ENCODE measurements at regions of chr11 and their contacts with region 1.

Region 1: GRCh38 chr11:13276832-13277767 is 490 bp upstream of the BMAL1 start:
- DNase-seq: peak; percentile 98 to 99 (median 99)
- ATAC-seq: peak; percentile 95 to 98 (median 98)
- H3K4me3 ChIP-seq: peak overlapping the region; percentile 84 to 99 (median 96)
- H3K27ac ChIP-seq: peak overlapping the region; percentile 37 to 95 (median 90)
- H3K4me1 ChIP-seq: peaks cover 0 to 33% (median 19%) of the 10 kb centered on the region in 12 donors
- H3K27me3 ChIP-seq: peaks cover 0 to 11% (median 0%) of the 10 kb centered on the region in 9 donors
- CTCF ChIP-seq: peak in 1 of 12 donors; percentile 6
- POLR2A ChIP-seq: peak; percentile 67 to 77

Region 2: DNA sequence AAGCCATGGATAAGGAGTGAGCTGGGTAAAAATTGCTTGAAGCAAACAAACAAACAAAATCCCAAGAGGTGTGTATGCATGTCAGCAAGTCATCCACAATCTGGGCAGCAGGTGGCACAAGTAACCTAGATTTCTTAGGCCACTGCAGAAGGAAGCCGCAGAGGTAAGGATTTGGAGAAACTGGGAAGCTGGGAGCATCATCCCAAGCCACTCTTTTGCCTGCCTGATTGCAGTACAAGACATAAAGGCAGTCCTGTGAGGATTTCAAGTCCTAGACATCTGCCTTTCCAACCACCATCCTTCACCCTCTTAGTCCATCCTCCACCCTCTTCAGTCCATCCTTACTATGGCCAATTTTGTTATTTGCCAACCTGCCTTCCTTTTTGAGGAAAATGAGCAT is 66.7 kb before region 1 on chr11:
- intact Hi-C with region 1: loop called in 2 of 10 experiments (anchors 5 to 10 kb)
- DNase-seq: peak in 4 of 5 donors; percentile 39 to 58 (median 52)
- ATAC-seq: peak in 3 of 4 donors; percentile 78 to 79 (median 78)
- H3K4me3 ChIP-seq: no peak overlapping the region
- H3K27ac ChIP-seq: no peak overlapping the region
- H3K4me1 ChIP-seq: peaks cover 0 to 28% (median 5%) of the 10 kb centered on the region in 12 donors
- H3K27me3 ChIP-seq: no peaks in the 10 kb centered on the region
- CTCF ChIP-seq: peak; percentile 30 to 73 (median 62)
- POLR2A ChIP-seq: no peak

Region 3: GRCh38 chr11:13261591-13262061 is 15.5 kb before region 1 on chr11:
- intact Hi-C with region 1: loop called in 1 of 10 experiments (anchors 1 kb)
- DNase-seq: no peak
- ATAC-seq: peak; percentile 68 to 92 (median 87)
- H3K4me3 ChIP-seq: peak overlapping the region in 1 of 12 donors; percentile 4
- H3K27ac ChIP-seq: peak overlapping the region; percentile 33 to 94 (median 76)
- H3K4me1 ChIP-seq: peaks cover 0 to 34% (median 20%) of the 10 kb centered on the region in 12 donors
- H3K27me3 ChIP-seq: no peaks in the 10 kb centered on the region
- CTCF ChIP-seq: no peak
- POLR2A ChIP-seq: no peak

Region 4: DNA sequence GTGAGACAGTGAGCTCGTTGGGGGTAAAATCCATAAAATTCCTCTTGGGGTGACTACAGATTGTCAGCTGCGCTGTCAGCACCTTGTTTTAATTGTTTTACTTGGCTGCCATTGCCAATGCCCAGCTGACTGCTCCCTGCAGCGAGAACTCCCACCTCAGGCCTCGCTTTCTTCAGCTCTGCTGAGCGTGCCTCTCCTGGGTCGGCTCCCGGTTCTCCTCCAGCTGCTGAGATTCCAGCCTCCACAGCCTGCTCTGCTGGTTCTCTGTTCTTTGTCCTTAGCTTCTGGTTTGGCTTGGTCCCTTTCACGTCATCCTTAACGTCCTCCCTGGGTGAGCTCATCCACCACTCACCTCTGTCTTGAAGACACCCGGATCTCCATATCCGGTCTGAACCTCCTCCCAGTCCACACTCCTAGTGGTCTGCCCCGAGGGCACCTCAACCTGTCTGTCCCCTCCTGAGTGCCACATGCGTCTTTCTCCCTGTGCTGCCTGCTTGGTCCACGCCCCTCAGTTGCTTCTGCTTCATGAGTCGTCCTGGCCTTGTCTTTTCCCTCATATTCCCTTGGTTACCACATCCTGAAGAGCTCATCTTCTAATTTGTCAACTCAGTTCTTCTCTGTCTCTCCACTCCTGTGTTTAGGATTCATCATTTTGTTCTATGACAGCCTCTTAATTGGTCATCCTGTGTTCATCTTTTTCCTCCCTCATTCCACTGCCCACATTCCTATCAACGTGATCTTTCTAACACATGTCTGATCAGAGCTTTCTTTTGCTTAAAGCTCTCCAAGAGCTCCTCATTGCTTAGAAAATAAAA is 36.1 kb after region 1 on chr11:
- intact Hi-C with region 1: loop called in 1 of 10 experiments (anchors 5 kb)
- DNase-seq: no peak
- ATAC-seq: peak in 3 of 4 donors; percentile 23 to 33 (median 24)
- H3K4me3 ChIP-seq: no peak overlapping the region
- H3K27ac ChIP-seq: no peak overlapping the region
- H3K4me1 ChIP-seq: peaks cover 0 to 58% (median 28%) of the 10 kb centered on the region in 12 donors
- H3K27me3 ChIP-seq: no peaks in the 10 kb centered on the region
- CTCF ChIP-seq: no peak
- POLR2A ChIP-seq: no peak

Region 5: GRCh38 chr11:13329670-13330356 is 52.7 kb after region 1 on chr11:
- intact Hi-C with region 1: loop called (anchors 2 to 10 kb)
- DNase-seq: peak in 2 of 5 donors; percentile 46 to 56
- ATAC-seq: peak; percentile 87 to 96 (median 90)
- H3K4me3 ChIP-seq: no peak overlapping the region
- H3K27ac ChIP-seq: peak overlapping the region in 5 of 12 donors; percentile 8 to 47 (median 30)
- H3K4me1 ChIP-seq: peaks cover 0 to 71% (median 28%) of the 10 kb centered on the region in 12 donors
- H3K27me3 ChIP-seq: no peaks in the 10 kb centered on the region
- CTCF ChIP-seq: no peak
- POLR2A ChIP-seq: no peak

Region 6: GRCh38 chr11:13335319-13335718 is 58.2 kb after region 1 on chr11:
- intact Hi-C with region 1: loop called (anchors 2 to 10 kb)
- DNase-seq: peak in 4 of 5 donors; percentile 48 to 63 (median 57)
- ATAC-seq: peak in 2 of 4 donors; percentile 24 to 38
- H3K4me3 ChIP-seq: no peak overlapping the region
- H3K27ac ChIP-seq: no peak overlapping the region
- H3K4me1 ChIP-seq: peaks cover 3 to 79% (median 41%) of the 10 kb centered on the region in 12 donors
- H3K27me3 ChIP-seq: no peaks in the 10 kb centered on the region
- CTCF ChIP-seq: peak; percentile 62 to 83 (median 78)
- POLR2A ChIP-seq: no peak

Region 7: DNA sequence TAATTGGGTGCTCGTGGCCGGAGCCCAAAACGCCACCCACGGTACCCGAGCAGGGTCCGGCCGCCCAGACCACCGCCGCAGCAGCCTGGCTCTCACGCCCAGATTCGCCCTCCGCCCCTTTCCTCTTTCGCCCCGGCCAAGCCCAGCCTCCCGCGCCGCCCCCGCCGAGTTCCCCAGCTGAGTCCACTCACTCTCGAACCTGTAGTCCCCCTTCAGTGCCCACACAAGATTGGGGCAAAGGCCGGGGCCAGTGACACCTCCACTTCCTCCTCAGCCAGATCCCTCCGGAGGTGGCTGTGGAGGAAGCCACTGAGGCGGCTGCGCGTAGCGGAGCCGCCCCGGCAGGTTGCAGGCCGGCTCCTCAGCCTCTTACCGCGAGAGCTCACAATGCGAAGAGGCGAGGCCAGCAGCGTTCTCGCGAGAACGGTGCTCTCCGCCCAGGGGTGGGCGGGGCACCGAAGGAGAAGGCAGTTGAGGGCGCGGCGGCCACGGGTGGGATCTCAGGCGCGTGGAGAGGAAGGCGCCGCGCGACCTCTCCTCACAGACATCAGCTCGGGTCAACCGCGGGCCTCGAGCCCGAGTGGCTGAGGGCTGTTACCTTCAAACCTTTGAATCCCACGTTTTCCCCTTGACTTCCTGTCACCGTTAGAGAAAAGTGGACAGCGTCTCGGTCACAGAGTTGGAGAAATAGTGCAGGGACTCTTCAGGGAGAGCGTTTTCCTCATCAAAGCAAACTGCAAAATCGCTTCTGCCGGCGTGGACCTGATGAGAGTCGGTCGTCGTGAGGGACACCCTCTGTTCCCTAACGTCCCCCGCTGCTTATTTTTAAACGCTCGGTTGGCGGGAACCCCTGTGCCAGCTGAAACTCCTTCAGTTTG is 186.0 kb after region 1 on chr11 and contains the start of gene BTBD10:
- intact Hi-C with region 1: loop called in 1 of 10 experiments (anchors 2 kb)
- DNase-seq: peak; percentile 94 to 97 (median 96)
- ATAC-seq: peak; percentile 97 to 100 (median 99)
- H3K4me3 ChIP-seq: peak within 1 kb of the TSS; percentile 68 to 94 (median 80)
- H3K27ac ChIP-seq: peak within 1 kb of the TSS; percentile 61 to 94 (median 89)
- H3K4me1 ChIP-seq: peaks cover 0 to 39% (median 13%) of the 10 kb centered on the region in 12 donors
- H3K27me3 ChIP-seq: no peaks in the 10 kb centered on the region
- CTCF ChIP-seq: peak in 1 of 12 donors; percentile 8
- POLR2A ChIP-seq: peak in 1 of 2 donors; percentile 92
- total RNA-seq, gene BTBD10: 22.6 to 31.4 (median 25.8) TPM